Colonic mucosa (tissue), 4 donors: ENCODE measurements at regions of chr6 and their contacts with region 1.

Region 1: GRCh38 chr6:7615611-7616383 is 25.8 kb downstream of the SNRNP48 start:
- DNase-seq: peak; percentile 58
- H3K4me3 ChIP-seq: no peak overlapping the region
- H3K27ac ChIP-seq: no peak overlapping the region
- H3K4me1 ChIP-seq: no peaks in the 10 kb centered on the region
- H3K27me3 ChIP-seq: no peaks in the 10 kb centered on the region
- CTCF ChIP-seq: peak; percentile 78

Region 2: DNA sequence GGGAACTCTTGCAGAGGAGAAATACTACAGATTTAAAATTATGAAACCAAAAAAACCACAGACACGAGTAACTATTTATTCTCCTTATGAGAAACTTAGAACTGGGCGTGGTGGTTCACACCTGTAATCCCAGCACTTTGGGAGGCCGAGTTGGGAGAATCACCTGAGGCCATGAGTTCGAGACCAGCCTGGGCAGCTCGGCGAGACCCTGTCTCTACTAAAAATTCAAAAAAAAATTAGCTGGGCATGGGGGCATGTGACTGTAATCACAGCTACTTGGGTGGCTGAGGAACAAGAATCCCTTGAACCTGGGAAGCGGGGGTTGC is 339.6 kb before region 1 on chr6:
- intact Hi-C with region 1: loop called (anchors 5 kb)
- DNase-seq: no peak
- H3K4me3 ChIP-seq: no peak overlapping the region
- H3K27ac ChIP-seq: no peak overlapping the region
- H3K4me1 ChIP-seq: no peaks in the 10 kb centered on the region
- H3K27me3 ChIP-seq: no peaks in the 10 kb centered on the region
- CTCF ChIP-seq: peak; percentile 3

Region 3: DNA sequence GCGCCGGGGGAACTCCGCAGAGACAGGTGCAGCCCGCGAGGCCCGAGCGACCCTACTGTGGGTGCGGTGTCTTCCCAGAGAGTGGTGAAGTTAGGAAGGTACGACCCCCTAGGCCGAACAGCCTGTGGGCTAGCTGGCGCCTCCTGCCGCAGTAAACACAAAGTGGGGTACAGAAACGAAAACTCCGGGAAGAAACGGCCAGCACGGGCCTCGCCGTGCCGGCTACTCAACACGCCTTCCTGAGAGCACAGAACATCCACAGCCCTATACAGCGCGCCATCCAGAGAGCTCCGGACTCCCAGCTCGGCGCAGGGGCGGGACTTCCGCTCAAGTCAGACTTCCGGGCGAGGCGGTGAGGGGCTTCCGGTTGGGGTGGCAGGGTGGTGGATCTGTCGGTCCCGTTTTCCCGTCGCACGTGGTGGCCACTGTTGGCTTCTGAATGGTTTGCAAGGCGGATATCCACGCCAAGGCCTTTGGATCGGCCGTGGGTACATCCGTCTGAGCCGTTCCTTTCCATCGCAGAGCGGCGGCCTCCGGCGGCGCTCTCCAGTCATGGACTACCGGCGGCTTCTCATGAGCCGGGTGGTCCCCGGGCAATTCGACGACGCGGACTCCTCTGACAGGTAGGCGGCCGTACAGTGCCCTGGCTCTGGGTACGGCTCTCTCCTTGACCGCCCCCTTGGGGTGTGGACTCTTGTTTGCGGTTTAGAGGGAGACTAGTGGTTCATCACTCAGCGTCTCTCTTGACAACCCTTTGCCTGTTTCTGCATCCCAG is 226.2 kb before region 1 on chr6 and contains the starts of genes CAGE1 and RIOK1:
- intact Hi-C with region 1: loop called (anchors 10 kb)
- DNase-seq: peak; percentile 98
- H3K4me3 ChIP-seq: peak within 1 kb of the TSS; percentile 73
- H3K27ac ChIP-seq: peak within 1 kb of the TSS; percentile 98
- H3K4me1 ChIP-seq: peaks cover 7% of the 10 kb centered on the region
- H3K27me3 ChIP-seq: no peaks in the 10 kb centered on the region
- CTCF ChIP-seq: no peak
- total RNA-seq, gene CAGE1: not detected
- total RNA-seq, gene RIOK1: 16.6 to 16.9 TPM

Region 4: GRCh38 chr6:7424967-7425807 is 190.6 kb before region 1 on chr6:
- intact Hi-C with region 1: loop called (anchors 5 kb)
- DNase-seq: no peak
- H3K4me3 ChIP-seq: no peak overlapping the region
- H3K27ac ChIP-seq: no peak overlapping the region
- H3K4me1 ChIP-seq: no peaks in the 10 kb centered on the region
- H3K27me3 ChIP-seq: no peaks in the 10 kb centered on the region
- CTCF ChIP-seq: peak; percentile 40

Region 5: DNA sequence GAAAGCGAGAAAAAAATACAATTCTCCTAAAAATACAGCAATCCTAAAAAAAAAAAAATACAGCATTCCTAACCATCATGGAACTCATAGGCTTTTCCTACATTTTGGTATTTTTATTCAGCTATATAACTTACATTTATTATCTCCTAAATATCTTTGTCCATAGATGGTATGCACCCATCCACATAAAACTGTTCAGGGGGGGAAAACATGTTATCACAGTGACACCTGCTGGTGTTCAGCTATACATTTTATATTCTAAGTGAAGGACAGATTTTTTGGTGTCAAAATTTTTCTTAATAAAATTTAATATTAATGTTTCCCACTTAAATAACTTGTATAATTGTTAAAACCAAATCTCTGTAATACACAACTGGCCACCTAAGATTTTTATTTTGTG is 390.4 kb after region 1 on chr6:
- intact Hi-C with region 1: loop called (anchors 5 kb)
- DNase-seq: no peak
- H3K4me3 ChIP-seq: no peak overlapping the region
- H3K27ac ChIP-seq: no peak overlapping the region
- H3K4me1 ChIP-seq: no peaks in the 10 kb centered on the region
- H3K27me3 ChIP-seq: no peaks in the 10 kb centered on the region
- CTCF ChIP-seq: peak; percentile 27